Sciatic nerve (tissue), 2 donors: ENCODE measurements at regions of chr17 and their contacts with region 1.

Region 1: DNA sequence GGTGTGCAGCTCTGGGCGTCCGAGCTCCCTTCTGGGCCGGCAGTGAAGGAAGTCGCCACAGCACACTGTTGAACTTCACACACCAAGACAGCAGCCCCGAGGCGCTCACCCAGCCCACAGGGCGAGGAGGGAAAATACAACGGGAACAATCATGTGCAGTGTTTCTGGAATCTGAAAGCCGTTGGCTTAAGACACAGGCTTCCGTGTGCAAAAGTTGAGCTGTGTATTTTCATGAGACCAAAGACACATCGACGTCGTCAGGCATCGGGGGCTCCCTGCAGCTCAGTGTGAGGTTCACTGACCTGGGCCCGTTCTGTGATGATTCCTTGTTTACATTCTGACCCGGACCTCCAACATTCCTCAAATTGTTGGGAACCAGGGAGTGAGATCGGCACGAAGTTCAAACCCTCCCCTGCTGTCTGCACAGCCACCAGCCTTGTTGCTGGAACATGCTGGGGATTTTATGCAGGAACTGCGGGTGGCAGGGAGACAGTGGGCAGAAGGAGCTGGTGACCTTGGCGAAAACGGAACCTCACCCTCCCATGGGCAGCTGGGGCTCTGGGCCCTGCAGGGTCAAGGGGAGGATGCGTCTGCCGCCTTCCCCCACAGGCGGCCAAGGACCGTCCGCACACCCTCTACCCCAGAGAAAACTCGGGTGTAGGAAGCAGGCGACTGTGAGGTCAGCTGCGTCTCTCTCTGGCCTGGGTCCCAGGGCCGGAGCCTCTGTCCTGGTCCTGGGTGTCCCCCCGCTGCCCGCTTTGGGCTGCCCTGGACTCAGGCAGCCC is 72.2 kb downstream of the METRNL start:
- DNase-seq: peak; percentile 73
- ATAC-seq: peak; percentile 70

Region 2: GRCh38 chr17:83171661-83172060 is 20.0 kb after region 1 on chr17:
- intact Hi-C with region 1: loop called (anchors 2 kb)
- DNase-seq: peak; percentile 59
- ATAC-seq: peak; percentile 43